Heart right ventricle (tissue), 16 donors: ENCODE measurements at regions of chr2 and their contacts with region 1.

Region 1: DNA sequence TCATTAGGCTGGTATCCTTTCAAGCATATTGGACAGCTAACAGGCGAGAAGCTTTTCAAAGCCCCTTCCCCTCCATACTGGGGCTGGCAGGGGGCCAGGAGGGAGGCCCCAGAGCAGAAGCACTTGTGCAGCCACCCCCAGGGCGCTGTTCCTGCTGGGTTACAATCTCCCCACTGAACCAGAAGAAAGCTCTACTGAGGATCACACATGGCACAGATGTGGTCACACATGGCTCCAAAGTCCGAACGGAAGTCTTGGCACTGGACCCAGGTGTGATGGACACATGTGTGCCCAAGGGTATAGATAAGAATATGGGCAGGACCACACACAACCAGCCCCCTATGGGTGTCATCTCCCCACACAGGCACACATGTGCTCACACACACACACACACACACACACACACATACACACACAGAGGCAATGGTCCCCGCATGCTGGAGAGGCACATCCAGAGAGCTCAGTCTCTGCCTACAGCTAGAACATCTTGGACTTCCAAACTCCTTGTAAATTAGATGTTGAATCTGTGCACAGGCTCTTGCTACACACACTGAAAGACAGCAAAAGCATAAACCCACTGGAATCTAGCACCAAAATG is 56.4 kb downstream of the TTC32 start:
- DNase-seq: no peak
- ATAC-seq: peak in 1 of 8 donors; percentile 22
- H3K4me3 ChIP-seq: no peak overlapping the region
- H3K27ac ChIP-seq: no peak overlapping the region
- H3K4me1 ChIP-seq: no peaks in the 10 kb centered on the region
- H3K27me3 ChIP-seq: no peaks in the 10 kb centered on the region
- CTCF ChIP-seq: no peak

Region 2: DNA sequence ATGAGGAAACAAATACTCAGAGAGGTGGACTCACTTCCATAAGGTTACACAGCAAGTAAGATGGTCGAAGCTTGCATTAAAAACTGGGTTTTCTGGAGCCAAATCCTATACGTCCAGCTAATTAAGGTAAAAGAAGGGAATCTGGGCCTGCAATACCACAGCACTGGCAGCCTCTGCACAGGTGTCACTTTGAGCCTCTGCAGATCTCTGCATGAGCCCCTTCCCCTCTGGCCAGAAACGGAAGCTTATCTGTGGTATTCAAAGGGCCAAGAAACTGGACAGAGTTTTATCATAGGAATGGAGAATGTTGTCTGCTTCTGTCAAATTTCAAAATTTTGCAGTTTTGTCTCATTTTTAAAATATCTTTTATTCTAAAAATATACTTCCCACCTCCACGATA is 563.1 kb before region 1 on chr2:
- intact Hi-C with region 1: no loop called
- DNase-seq: no peak
- ATAC-seq: no peak
- H3K4me3 ChIP-seq: no peak overlapping the region
- H3K27ac ChIP-seq: no peak overlapping the region
- H3K4me1 ChIP-seq: no peaks in the 10 kb centered on the region
- H3K27me3 ChIP-seq: no peaks in the 10 kb centered on the region
- CTCF ChIP-seq: no peak

Region 3: DNA sequence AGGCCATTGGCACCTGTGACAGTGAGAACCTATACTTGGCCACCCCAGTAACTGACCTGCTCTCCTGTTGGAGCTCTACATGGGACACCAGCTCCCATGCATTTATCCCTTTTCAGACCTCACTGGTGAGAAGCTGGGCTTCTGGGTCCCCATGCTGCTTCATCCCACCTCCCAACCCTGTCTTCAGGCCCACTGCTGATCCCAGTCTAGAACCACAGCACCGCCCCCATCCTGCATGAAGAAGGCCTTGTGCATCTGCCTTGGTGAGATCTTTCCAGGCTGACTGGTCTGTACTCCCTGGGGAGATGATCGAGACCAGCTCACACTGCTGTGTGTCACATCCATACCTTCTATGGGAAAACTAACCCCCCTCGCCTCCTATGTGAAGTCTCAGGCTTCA is 33.7 kb after region 1 on chr2:
- intact Hi-C with region 1: loop called in 1 of 10 experiments (anchors 2 kb)
- DNase-seq: no peak
- ATAC-seq: no peak
- H3K4me3 ChIP-seq: no peak overlapping the region
- H3K27ac ChIP-seq: no peak overlapping the region
- H3K4me1 ChIP-seq: no peaks in the 10 kb centered on the region
- H3K27me3 ChIP-seq: no peaks in the 10 kb centered on the region
- CTCF ChIP-seq: no peak

Region 4: DNA sequence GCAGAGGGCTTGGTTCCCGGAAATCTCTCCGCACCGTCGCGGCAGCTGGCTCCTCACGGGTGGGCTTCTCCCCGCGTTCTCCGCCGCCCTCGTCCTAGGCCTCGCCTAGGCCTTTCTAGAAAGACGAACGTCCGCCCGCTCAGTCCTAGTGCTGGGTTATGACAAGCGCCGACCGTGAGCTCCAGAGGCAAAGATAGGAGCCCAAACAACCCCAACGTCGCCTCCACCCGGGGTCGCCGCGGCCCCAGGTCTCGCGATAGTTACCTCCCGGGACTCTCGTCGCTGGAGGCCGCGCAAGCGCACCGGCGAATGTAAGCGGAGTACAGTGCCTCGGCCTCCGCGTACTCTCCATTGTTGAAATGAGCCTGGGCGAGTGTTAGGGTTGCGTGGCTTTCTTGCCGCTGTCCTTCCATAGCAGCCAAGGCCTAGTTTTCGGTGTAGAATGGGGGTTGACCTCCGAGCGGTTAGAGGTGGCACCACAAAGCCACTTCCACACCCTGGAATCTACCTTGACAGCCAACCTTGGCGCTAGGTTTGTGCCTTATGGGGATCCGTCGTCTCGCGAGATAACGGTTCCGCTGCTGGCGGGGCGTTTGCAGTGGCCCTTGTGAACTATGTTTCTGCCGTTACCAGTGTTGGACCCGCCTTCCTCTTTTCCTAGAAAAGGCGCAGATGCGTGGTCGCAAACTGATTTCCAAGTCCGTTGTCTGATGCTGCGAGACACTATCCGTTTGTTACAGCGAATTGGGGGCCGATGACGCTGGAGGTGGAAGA is 56.2 kb after region 1 on chr2 and contains the start of gene TTC32:
- intact Hi-C with region 1: no loop called
- DNase-seq: peak; percentile 94 to 96
- ATAC-seq: peak; percentile 97 to 99 (median 98)
- H3K4me3 ChIP-seq: peak within 1 kb of the TSS; percentile 70 to 97 (median 80)
- H3K27ac ChIP-seq: peak within 1 kb of the TSS; percentile 87 to 99 (median 95)
- H3K4me1 ChIP-seq: peaks cover 3 to 51% (median 47%) of the 10 kb centered on the region in 9 donors
- H3K27me3 ChIP-seq: no peaks in the 10 kb centered on the region
- CTCF ChIP-seq: peak in 1 of 9 donors; percentile 9
- total RNA-seq, gene TTC32: 3.4 to 9.0 (median 6.0) TPM